Left ventricle myocardium superior (tissue), 1 donor: ENCODE measurements at regions of chr5 and their contacts with region 1.

Region 1: DNA sequence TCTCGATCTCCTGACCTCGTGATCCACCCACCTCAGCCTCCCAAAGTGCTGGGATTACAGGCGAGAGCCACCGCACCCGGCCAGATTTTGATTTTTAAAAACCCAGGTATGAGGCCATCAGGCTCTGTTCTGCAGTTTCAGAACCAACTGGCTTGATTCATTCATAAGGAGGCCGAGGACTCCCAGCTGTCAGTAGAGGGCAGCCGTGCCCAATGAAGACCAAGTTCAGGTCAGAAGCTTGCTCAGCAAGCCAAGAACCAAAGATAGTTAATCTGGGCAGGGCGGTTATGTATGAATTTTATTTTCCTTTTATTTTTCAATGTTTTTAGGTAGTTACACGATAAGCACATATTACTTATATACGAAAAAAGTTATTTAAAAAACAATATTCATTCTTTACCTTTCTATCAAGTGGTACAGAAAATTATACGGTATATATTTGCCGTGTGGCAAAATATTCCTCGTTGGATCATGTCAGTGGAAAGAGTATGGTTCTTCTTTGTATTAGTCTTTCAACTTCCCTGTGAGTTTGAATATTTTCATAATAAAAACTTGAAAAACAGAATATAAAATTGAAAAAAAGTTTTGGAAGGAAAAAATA is 18.0 kb downstream of the MGAT1 start:
- DNase-seq: peak; percentile 84
- ATAC-seq: peak; percentile 80

Region 2: GRCh38 chr5:180494060-180494509 is 290.5 kb before region 1 on chr5 and contains the start of gene CNOT6:
- intact Hi-C with region 1: no loop called
- DNase-seq: peak; percentile 97
- ATAC-seq: peak; percentile 99
- total RNA-seq, gene CNOT6: 14.6 TPM

Region 3: DNA sequence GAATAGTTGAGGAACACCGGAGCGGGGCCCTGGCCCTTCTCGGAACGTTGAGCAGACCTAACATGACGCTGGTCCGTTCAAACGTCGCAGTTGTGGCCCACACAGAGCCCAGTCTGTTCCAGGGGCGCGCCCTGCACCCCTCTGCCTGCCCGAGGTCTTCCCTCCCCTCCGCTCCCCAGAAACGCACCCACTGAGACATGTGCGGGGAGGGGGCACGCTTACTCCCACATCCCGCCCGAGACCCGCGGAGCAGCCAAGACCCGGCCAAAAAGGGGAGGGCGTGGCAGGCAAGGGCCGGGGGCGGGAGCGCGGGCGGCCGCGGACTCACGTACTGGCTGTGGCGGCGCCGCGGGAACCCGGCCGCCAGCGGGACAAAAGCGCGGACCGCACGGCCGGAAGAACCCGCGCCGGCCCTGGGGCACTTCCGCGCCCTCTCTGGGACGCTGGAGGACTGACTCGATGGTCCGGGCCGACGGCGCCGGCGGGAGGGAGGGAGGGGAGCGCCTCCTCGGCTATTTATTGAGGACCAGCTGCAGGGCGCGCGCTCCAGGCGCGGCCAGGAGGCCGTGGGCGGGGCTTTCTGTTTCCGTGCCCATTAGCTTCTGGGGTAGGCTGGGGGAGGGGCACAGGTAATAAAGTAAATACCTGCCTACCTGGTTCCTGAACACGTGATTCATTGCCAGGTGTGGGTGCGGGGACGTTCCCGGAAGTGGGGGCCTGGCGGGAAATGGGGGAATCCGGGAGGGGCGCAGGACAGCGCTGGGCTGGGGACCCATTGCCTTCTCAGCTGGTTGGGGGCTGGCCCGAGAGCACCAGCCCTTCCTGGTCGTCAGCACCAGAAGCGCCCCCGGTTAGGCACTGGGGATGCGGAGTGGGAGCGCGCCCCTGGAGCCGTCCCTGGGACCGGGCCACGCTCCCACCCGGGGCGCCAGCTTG is 76.6 kb after region 1 on chr5 and contains the start of gene ZFP62:
- intact Hi-C with region 1: loop called (anchors 10 kb)
- DNase-seq: peak; percentile 94
- ATAC-seq: peak; percentile 98
- total RNA-seq, gene ZFP62: 15.2 TPM

Region 4: GRCh38 chr5:181037365-181037861 is 252.8 kb after region 1 on chr5:
- intact Hi-C with region 1: loop called (anchors 10 kb)
- DNase-seq: no peak
- ATAC-seq: peak; percentile 57